OCI-LY7 (cell line): ENCODE measurements at regions of chr1 and their contacts with region 1.

Region 1: GRCh38 chr1:26145041-26145959 is 13.6 kb upstream of the FAM110D start:
- DNase-seq: peak; percentile 83
- H3K4me3 ChIP-seq: no peak overlapping the region
- H3K27ac ChIP-seq: no peak overlapping the region
- H3K4me1 ChIP-seq: no peaks in the 10 kb centered on the region
- CTCF ChIP-seq: peak; percentile 86

Region 2: GRCh38 chr1:26035959-26036755 is 109.1 kb before region 1 on chr1:
- CTCF ChIA-PET with region 1: no interaction called
- POLR2A ChIA-PET with region 1: no interaction called
- intact Hi-C with region 1: loop called (anchors 1 kb)
- DNase-seq: peak; percentile 71
- H3K4me3 ChIP-seq: peak overlapping the region; percentile 75
- H3K27ac ChIP-seq: no peak overlapping the region
- H3K4me1 ChIP-seq: peaks cover 7% of the 10 kb centered on the region
- CTCF ChIP-seq: peak; percentile 93